A673 (cell line): ENCODE measurements at regions of chr6 and their contacts with region 1.

Region 1: GRCh38 chr6:16761471-16762267 is 409 bp upstream of the ATXN1 start:
- DNase-seq: peak; percentile 96
- H3K4me3 ChIP-seq: peak overlapping the region; percentile 88
- H3K27ac ChIP-seq: peak overlapping the region; percentile 63
- H3K4me1 ChIP-seq: peaks cover 42% of the 10 kb centered on the region
- H3K27me3 ChIP-seq: no peaks in the 10 kb centered on the region
- CTCF ChIP-seq: peak; percentile 39; the same call in 1 of the 2 replicates

Region 2: DNA sequence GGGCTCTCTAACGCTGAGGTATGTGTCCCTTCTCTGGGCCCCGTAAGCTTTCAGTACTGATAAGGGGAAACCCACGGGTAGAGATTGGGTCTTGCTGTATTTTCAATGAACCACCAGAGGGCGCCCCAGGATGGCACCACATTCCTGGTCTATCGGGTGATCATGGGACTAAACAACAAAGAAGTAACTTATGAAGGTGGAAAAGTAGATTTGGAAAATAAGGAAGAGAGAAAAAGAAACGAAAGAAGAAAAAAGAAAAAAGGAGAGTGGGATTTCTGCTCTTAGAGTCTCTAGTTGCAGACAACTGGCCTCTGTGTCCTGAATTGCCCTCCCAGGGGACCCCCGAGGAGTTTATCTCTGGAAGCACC is 429.5 kb before region 1 on chr6:
- CTCF ChIA-PET with region 1: interaction called, 3 read pairs
- POLR2A ChIA-PET with region 1: no interaction called
- intact Hi-C with region 1: loop called (anchors 2 kb)
- DNase-seq: peak; percentile 89
- H3K4me3 ChIP-seq: peak overlapping the region; percentile 12
- H3K27ac ChIP-seq: peak overlapping the region; percentile 3
- H3K4me1 ChIP-seq: peaks cover 20% of the 10 kb centered on the region
- H3K27me3 ChIP-seq: no peaks in the 10 kb centered on the region
- CTCF ChIP-seq: peak; percentile 94

Region 3: DNA sequence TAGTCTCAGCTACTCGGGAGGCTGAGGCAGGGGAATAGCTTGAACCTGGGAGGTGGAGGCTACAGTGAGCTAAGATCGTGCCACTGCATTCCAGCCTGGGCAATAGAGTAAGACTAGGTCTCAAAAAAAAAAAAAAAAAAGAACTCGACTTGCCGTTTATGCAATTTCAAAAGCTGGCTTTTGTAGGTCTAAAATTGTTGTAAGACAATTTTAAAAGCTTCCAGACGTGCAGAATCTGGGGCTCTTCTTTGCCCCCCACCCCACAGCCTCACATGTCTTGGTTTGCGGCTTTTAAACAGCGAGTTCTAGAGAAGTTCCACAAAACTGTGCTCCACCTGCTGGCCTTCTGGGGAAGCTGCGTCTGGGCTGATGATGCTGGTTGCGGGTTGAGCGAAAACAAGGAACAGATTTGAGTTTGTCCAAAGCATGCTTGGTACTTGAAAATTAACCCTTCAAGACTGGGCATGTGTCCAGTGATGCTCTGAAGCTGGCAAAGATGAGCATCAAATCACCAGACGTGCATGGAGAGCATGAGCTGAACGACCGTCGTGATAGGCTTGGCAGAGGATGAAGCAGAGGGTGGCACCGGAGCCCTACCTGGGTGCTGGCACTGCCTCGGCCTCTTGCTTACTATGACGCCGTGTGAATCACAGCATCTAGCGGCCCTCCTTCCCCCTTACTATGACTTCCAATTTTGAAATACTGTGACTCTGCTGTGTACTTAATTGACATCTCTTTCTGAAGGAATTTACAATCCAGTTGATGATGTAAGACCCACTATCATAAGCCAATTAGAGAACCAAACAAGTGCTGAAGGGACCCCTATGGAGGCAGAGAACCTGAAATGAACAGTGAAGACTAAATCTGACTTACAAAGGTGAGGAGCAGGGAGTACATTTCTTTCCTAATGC is 351.9 kb before region 1 on chr6:
- CTCF ChIA-PET with region 1: no interaction called
- POLR2A ChIA-PET with region 1: no interaction called
- intact Hi-C with region 1: loop called (anchors 5 kb)
- DNase-seq: peak; percentile 80
- H3K4me3 ChIP-seq: peak overlapping the region; percentile 13
- H3K27ac ChIP-seq: no peak overlapping the region
- H3K4me1 ChIP-seq: peaks cover 26% of the 10 kb centered on the region
- H3K27me3 ChIP-seq: no peaks in the 10 kb centered on the region
- CTCF ChIP-seq: peak; percentile 94

Region 4: GRCh38 chr6:16535564-16535963 is 226.1 kb before region 1 on chr6:
- CTCF ChIA-PET with region 1: no interaction called
- POLR2A ChIA-PET with region 1: no interaction called
- intact Hi-C with region 1: no loop called
- DNase-seq: no peak
- H3K4me3 ChIP-seq: no peak overlapping the region
- H3K27ac ChIP-seq: no peak overlapping the region
- H3K4me1 ChIP-seq: no peaks in the 10 kb centered on the region
- H3K27me3 ChIP-seq: no peaks in the 10 kb centered on the region
- CTCF ChIP-seq: no peak

Region 5: DNA sequence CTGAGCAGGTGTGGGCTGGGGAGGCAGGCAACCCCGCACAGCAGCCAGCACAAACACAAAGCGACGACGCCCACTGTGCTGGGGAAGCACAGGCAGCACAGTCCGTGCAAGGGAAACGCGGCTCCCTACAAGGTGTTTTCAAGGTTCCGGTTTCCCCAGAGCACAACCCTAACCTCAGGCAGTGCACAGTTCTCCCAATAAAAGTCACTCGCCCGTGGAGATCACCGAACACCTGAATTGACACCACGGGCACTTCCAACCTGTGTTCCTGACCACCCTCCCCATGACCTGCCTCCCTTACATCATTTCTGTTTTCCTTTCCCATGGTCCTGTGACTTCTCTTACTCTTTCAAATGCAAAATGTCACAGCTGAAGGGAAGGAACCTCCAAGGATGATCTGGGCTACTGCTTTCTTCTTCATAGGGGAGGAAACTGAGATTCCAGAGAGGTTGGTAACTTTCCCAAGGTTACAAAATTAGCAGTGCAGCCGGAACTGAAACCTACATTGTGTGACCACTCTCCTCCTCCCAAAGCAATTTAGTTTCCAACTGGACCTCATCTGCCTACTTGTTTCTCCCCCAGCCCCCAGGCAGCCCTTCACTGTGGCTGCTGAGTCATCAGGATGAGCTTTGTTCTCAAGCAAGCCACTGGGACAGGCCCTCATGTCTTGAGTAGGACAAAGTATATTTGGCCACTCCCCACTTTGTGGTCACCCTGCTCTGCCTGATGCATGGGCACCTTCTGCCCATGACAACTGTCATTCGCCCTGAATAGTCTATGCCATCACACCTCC is 125.7 kb before region 1 on chr6:
- CTCF ChIA-PET with region 1: no interaction called
- POLR2A ChIA-PET with region 1: interaction called, 11 read pairs
- intact Hi-C with region 1: no loop called
- DNase-seq: no peak
- H3K4me3 ChIP-seq: no peak overlapping the region
- H3K27ac ChIP-seq: no peak overlapping the region
- H3K4me1 ChIP-seq: peaks cover 4% of the 10 kb centered on the region
- H3K27me3 ChIP-seq: no peaks in the 10 kb centered on the region
- CTCF ChIP-seq: no peak

Region 6: GRCh38 chr6:16712931-16713484 is 48.7 kb before region 1 on chr6:
- CTCF ChIA-PET with region 1: interaction called, 7 read pairs
- POLR2A ChIA-PET with region 1: no interaction called
- intact Hi-C with region 1: loop called (anchors 5 kb)
- DNase-seq: peak; percentile 93
- H3K4me3 ChIP-seq: peak overlapping the region; percentile 35
- H3K27ac ChIP-seq: peak overlapping the region; percentile 78
- H3K4me1 ChIP-seq: peaks cover 36% of the 10 kb centered on the region
- H3K27me3 ChIP-seq: no peaks in the 10 kb centered on the region
- CTCF ChIP-seq: peak; percentile 63

Region 7: GRCh38 chr6:16776394-16777017 is 14.8 kb after region 1 on chr6:
- CTCF ChIA-PET with region 1: interaction called, 13 read pairs
- POLR2A ChIA-PET with region 1: no interaction called
- intact Hi-C with region 1: no loop called
- DNase-seq: peak; percentile 25
- H3K4me3 ChIP-seq: no peak overlapping the region
- H3K27ac ChIP-seq: no peak overlapping the region
- H3K4me1 ChIP-seq: peaks cover 35% of the 10 kb centered on the region
- H3K27me3 ChIP-seq: no peaks in the 10 kb centered on the region
- CTCF ChIP-seq: 0 out of 2 replicates have a peak, but pooled peaks have one; percentile 14

Region 8: GRCh38 chr6:17086469-17086868 is 324.8 kb after region 1 on chr6:
- CTCF ChIA-PET with region 1: interaction called, 9 read pairs
- POLR2A ChIA-PET with region 1: no interaction called
- intact Hi-C with region 1: loop called (anchors 2 kb)
- DNase-seq: peak; percentile 79
- H3K4me3 ChIP-seq: no peak overlapping the region
- H3K27ac ChIP-seq: no peak overlapping the region
- H3K4me1 ChIP-seq: peaks cover 12% of the 10 kb centered on the region
- H3K27me3 ChIP-seq: no peaks in the 10 kb centered on the region
- CTCF ChIP-seq: peak; percentile 72